ENCODE measurements at regions of chr2 and their contacts with region 1.

Region 1: DNA sequence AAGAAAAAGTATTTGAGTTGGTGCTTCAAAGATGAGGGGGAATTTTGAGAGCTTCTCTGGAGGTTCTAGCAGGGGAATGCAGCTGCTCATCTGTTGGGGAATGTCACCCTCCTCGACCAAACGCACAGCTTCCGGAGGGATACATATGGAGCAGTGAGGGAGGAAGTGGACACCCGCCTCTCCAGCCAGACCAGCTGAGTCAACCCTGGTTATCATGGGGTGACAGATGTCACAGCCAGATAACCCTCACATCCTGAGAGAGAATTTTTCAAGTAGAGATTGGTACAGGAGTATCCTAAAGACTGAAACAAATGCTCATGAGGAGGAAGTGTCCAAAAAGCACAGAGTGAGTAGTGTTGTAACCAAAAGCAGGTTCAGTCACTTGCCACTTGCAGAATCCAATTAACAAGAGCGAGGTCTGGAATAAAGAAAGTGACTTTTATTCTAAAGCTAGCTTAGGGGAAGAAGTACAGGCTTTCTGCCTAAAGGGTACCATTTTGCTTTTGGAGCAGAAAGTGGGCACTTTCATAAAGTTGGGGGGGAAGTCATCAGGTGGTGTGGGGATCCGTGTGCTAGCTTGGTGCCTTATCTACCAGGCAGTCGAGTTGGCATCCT is 395.2 kb downstream of the RAD51AP2 start:
- DNase-seq: peak; percentile 94 to 100 (median 99)
- H3K4me3 ChIP-seq: peak overlapping the region in 4 of 7 experiments; percentile 14 to 50 (median 39)
- H3K27ac ChIP-seq: peak overlapping the region; percentile 21 to 65
- H3K4me1 ChIP-seq: peaks cover 20 to 51% (median 35%) of the 10 kb centered on the region in 4 experiments
- H3K27me3 ChIP-seq: no peaks in the 10 kb centered on the region

Region 2: GRCh38 chr2:17148407-17149145 is 25.6 kb after region 1 on chr2:
- CTCF ChIA-PET with region 1: interaction called, 21 read pairs
- POLR2A ChIA-PET with region 1: no interaction called
- DNase-seq: peak; percentile 21 to 54 (median 34)
- H3K4me3 ChIP-seq: no peak overlapping the region
- H3K27ac ChIP-seq: no peak overlapping the region
- H3K4me1 ChIP-seq: peaks cover 0 to 7% (median 5%) of the 10 kb centered on the region in 4 experiments
- H3K27me3 ChIP-seq: no peaks in the 10 kb centered on the region